Endothelial cell of umbilical vein (primary cell): ENCODE measurements at regions of chr12 and their contacts with region 1.

Region 1: DNA sequence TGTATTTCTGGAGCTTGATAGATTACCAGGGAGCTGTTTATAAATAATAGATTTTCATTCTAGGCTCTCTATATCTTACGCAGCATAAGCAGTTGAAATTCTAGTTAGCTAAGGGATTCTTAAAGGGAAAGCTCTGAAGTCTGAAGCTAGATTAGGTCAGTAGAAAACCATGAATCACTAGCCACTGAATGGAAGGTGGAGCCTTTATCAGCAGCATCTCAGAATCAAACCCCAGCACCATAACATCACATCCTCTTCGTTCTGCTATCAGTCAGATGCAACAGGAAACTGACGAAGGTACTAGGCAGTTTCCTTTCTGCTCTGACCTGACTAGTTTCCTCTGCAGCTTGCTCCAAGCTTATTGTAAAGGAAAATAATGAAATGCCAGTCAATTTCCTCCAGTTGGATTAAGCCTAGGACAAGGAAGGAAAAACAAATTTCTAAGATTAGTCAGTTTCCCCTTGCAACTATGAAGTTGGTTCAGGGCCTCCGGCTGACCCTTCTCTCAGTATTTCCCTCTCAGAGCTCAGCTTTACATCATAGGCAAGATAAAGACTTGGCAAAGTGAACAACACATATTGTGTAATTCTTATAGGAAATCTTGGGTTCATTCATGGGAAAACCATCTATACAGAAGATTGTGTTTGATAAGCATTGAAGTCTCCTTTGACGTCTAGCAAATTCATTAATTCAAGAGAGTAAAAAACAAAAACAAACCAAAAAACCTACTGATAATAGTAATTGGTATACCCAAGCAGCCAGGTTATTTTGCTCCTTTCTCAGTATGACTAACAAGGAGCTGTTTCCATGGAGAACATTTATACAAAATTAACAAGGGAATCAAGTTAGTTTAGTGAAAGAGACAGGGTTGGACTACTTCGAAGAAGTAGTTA is 43.4 kb upstream of the CFAP54 start:
- DNase-seq: peak; percentile 100
- H3K4me3 ChIP-seq: no peak overlapping the region
- H3K27ac ChIP-seq: peak overlapping the region; percentile 99
- H3K4me1 ChIP-seq: peaks cover 51% of the 10 kb centered on the region
- H3K27me3 ChIP-seq: no peaks in the 10 kb centered on the region
- CTCF ChIP-seq: no peak
- POLR2A ChIP-seq: peak; percentile 88

Region 2: DNA sequence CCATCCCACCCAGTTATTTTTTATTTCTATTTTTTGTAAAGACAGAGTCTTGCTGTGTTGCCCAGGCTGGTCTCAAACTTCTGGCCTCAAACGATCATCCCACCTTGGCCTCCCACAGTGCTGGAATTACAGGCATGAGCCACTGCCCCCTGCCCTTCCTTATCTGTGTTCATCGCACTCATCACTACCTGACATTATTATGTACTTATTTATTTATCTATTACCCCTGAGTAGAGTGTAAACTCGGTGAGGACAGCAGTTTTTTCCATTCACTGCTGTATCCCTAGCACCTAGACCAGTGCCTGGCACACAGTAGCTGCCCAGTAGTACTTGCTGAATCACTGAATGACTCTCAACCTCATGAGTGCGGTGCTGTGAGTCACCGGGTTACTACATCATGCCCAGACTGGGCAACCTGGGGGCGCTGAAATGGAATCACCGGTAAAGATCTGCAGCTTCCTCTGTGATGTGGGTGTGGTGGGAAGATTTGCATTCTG is 812.8 kb before region 1 on chr12:
- CTCF ChIA-PET with region 1: no interaction called
- POLR2A ChIA-PET with region 1: no interaction called
- dilution Hi-C with region 1: no loop called
- intact Hi-C with region 1: loop called (anchors 5 kb)
- DNase-seq: peak; percentile 90
- H3K4me3 ChIP-seq: no peak overlapping the region
- H3K27ac ChIP-seq: peak overlapping the region; percentile 99
- H3K4me1 ChIP-seq: peaks cover 54% of the 10 kb centered on the region
- H3K27me3 ChIP-seq: no peaks in the 10 kb centered on the region
- CTCF ChIP-seq: no peak
- POLR2A ChIP-seq: no peak

Region 3: GRCh38 chr12:96392397-96392796 is 53.5 kb before region 1 on chr12:
- CTCF ChIA-PET with region 1: interaction called, 4 read pairs
- POLR2A ChIA-PET with region 1: interaction called, 85 read pairs
- dilution Hi-C with region 1: no loop called
- intact Hi-C with region 1: no loop called
- DNase-seq: peak; percentile 65
- H3K4me3 ChIP-seq: peak overlapping the region in 2 of 3 experiments; percentile 2 to 50
- H3K27ac ChIP-seq: peak overlapping the region; percentile 68
- H3K4me1 ChIP-seq: peaks cover 57% of the 10 kb centered on the region
- H3K27me3 ChIP-seq: no peaks in the 10 kb centered on the region
- CTCF ChIP-seq: no peak
- POLR2A ChIP-seq: no peak

Region 4: GRCh38 chr12:96422192-96422591 is 23.7 kb before region 1 on chr12:
- CTCF ChIA-PET with region 1: interaction called, 11 read pairs
- POLR2A ChIA-PET with region 1: interaction called, 55 read pairs
- dilution Hi-C with region 1: no loop called
- intact Hi-C with region 1: loop called (anchors 1 kb)
- DNase-seq: peak; percentile 89
- H3K4me3 ChIP-seq: no peak overlapping the region
- H3K27ac ChIP-seq: peak overlapping the region; percentile 99
- H3K4me1 ChIP-seq: peaks cover 69% of the 10 kb centered on the region
- H3K27me3 ChIP-seq: no peaks in the 10 kb centered on the region
- CTCF ChIP-seq: no peak
- POLR2A ChIP-seq: no peak

Region 5: DNA sequence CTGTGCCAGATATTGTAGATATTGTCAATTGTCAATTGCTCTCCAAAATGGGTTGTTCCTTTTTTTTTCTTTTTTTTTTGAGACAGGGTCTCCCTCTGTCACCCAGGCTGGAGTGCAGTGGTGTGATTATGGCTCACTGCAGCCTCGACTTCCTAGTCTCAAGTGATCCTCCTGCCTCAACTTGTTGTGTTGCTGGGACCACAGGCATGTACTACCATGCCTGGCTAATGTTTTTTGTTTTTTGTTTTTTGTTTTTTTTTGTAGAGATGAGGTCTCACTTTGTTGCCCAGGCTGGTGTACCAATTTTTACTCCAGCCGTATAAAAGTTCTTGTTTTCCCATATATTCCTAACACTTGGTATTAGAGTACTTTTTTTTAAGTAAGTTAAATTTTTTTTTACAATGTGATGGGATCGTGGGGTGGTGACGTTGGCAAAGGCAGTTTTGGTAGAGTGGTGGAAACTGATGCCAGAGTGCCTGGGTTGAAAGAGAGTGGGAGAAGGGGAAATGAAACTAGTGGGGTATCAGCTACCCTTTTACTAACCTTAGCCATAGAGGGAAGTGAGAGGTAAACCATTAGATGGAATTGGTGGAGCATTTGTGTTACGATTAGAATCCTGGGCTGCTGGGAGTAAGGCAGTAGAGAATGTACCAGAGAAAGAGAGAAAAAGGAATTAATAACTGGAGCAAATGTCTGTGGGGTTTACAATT is 10.5 kb after region 1 on chr12:
- CTCF ChIA-PET with region 1: interaction called, 11 read pairs
- POLR2A ChIA-PET with region 1: interaction called, 3 read pairs
- dilution Hi-C with region 1: no loop called
- intact Hi-C with region 1: no loop called
- DNase-seq: no peak
- H3K4me3 ChIP-seq: no peak overlapping the region
- H3K27ac ChIP-seq: no peak overlapping the region
- H3K4me1 ChIP-seq: peaks cover 12% of the 10 kb centered on the region
- H3K27me3 ChIP-seq: no peaks in the 10 kb centered on the region
- CTCF ChIP-seq: no peak
- POLR2A ChIP-seq: no peak

Region 6: DNA sequence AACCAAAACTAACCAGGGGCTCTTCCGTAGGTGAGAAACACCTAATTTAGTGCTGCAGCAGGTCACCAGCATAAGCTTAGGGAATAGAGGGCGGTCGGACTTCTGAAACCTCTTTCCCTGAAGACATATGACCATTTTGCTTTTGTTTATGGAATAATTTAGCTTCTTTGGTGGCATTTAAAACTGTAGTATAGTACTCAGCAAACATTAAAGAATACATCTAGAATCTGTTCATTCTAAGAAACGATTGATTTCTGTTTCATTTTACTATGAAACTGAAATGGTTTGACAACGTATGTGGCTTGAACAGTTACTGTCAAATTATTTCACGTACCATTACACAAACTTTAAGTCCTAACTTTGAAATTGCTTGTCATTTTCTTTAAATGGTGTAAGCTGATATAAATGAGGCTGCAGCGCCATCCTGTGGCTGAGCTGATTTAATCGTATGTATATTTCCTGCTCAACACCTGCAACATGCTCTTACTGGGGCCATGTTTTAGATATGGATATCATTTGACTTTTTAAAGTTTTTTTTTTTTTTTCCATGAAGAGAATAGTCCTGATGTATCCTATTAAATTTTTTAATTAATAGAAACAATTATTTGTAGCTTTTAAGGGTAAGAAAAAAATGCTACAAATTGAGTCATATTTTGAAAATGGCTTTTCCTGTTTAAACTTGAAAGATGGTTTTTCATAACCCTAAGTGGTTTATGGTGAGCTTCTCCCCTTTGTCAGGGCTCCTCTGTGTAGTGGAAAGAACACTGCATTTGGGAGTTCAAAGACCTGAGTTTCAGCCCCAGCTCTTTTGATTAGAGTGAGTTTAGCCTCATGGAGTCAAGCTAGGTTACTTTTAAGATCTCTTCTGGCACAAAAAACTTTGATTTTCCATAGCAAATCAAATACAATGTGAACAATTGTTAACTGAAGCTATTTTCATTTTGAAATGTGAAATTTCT is 70.8 kb after region 1 on chr12:
- CTCF ChIA-PET with region 1: interaction called, 14 read pairs
- POLR2A ChIA-PET with region 1: interaction called, 5 read pairs
- dilution Hi-C with region 1: no loop called
- intact Hi-C with region 1: loop called (anchors 1 kb)
- DNase-seq: peak; percentile 94
- H3K4me3 ChIP-seq: no peak overlapping the region
- H3K27ac ChIP-seq: peak overlapping the region; percentile 69
- H3K4me1 ChIP-seq: peaks cover 16% of the 10 kb centered on the region
- H3K27me3 ChIP-seq: no peaks in the 10 kb centered on the region
- CTCF ChIP-seq: peak; percentile 29 to 35
- POLR2A ChIP-seq: no peak

Region 7: GRCh38 chr12:96623656-96624217 is 177.8 kb after region 1 on chr12:
- CTCF ChIA-PET with region 1: no interaction called
- POLR2A ChIA-PET with region 1: no interaction called
- dilution Hi-C with region 1: no loop called
- intact Hi-C with region 1: no loop called
- DNase-seq: no peak
- H3K4me3 ChIP-seq: no peak overlapping the region
- H3K27ac ChIP-seq: no peak overlapping the region
- H3K4me1 ChIP-seq: no peaks in the 10 kb centered on the region
- H3K27me3 ChIP-seq: no peaks in the 10 kb centered on the region
- CTCF ChIP-seq: no peak
- POLR2A ChIP-seq: no peak